Tibial artery (tissue), 4 donors: ENCODE measurements at regions of chr12 and their contacts with region 1.

Region 1: DNA sequence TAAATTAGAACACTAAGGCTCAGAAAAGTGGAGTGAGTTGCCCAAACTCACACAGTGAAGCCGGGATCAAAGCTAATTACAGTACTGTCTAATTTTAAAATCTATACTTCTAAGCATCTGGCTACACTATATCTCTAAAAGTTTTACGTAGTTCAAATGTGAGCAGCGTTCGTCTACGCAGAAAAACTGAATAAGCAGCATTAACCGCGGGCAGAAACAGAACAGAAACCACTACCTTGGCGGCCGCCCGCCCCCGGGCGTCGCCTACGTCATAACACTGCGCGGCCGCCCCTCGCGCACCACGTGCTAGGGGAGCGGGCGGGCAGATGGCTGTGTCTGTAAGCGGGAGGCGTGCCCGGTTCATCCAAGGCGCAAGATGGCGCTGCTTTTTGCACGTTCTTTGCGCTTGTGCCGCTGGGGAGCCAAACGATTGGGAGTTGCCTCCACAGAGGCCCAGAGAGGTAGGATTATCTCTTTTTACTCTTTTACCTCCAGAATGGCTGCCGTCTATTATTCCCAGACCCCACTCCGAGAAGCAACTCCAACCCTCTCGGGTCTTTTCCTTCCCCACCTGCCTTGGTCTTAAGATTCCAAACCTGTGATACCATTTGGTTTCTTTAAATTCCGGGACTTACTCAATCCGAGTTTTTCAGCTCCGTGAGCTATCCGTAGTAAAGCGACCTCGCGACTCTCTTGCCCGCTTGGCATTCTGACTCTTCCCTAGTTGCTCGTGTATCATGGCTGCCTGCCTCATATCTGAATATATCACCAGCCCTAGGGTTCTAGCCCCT is at the start of gene SPRYD4:
- DNase-seq: peak; percentile 93 to 95
- H3K4me3 ChIP-seq: peak within 1 kb of the TSS; percentile 60 to 82
- H3K27ac ChIP-seq: peak within 1 kb of the TSS; percentile 84 to 89
- H3K4me1 ChIP-seq: peaks cover 0 to 21% (median 15%) of the 10 kb centered on the region in 4 donors
- H3K27me3 ChIP-seq: no peaks in the 10 kb centered on the region
- CTCF ChIP-seq: peak; percentile 17 to 21

Region 2: GRCh38 chr12:56117778-56118687 is 350.4 kb before region 1 on chr12 and contains the start of gene ZC3H10:
- intact Hi-C with region 1: loop called (anchors 5 kb)
- DNase-seq: peak; percentile 98 to 99
- H3K4me3 ChIP-seq: peak within 1 kb of the TSS; percentile 62 to 75
- H3K27ac ChIP-seq: peak within 1 kb of the TSS; percentile 86 to 94
- H3K4me1 ChIP-seq: peaks cover 0 to 30% (median 24%) of the 10 kb centered on the region in 4 donors
- H3K27me3 ChIP-seq: no peaks in the 10 kb centered on the region
- CTCF ChIP-seq: peak; percentile 35 to 44

Region 3: GRCh38 chr12:56189176-56189917 is 279.1 kb before region 1 on chr12 and contains the start of gene SMARCC2:
- intact Hi-C with region 1: loop called (anchors 10 kb)
- DNase-seq: peak; percentile 86 to 95
- H3K4me3 ChIP-seq: peak within 1 kb of the TSS; percentile 92 to 95
- H3K27ac ChIP-seq: peak within 1 kb of the TSS; percentile 94 to 99
- H3K4me1 ChIP-seq: peaks cover 0 to 28% (median 23%) of the 10 kb centered on the region in 4 donors
- H3K27me3 ChIP-seq: no peaks in the 10 kb centered on the region
- CTCF ChIP-seq: peak; percentile 60 to 94

Region 4: GRCh38 chr12:56321027-56321426 is 147.4 kb before region 1 on chr12:
- intact Hi-C with region 1: loop called (anchors 5 kb)
- DNase-seq: no peak
- H3K4me3 ChIP-seq: no peak overlapping the region
- H3K27ac ChIP-seq: no peak overlapping the region
- H3K4me1 ChIP-seq: peaks cover 0 to 7% (median 4%) of the 10 kb centered on the region in 4 donors
- H3K27me3 ChIP-seq: no peaks in the 10 kb centered on the region
- CTCF ChIP-seq: no peak

Region 5: GRCh38 chr12:56359851-56360767 is 108.3 kb before region 1 on chr12 and contains the start of gene STAT2:
- intact Hi-C with region 1: loop called (anchors 2 kb)
- DNase-seq: peak; percentile 99 to 100
- H3K4me3 ChIP-seq: peak within 1 kb of the TSS; percentile 79 to 89
- H3K27ac ChIP-seq: peak within 1 kb of the TSS; percentile 89 to 93
- H3K4me1 ChIP-seq: peaks cover 0 to 24% (median 13%) of the 10 kb centered on the region in 4 donors
- H3K27me3 ChIP-seq: no peaks in the 10 kb centered on the region
- CTCF ChIP-seq: no peak